Activated CD4-positive, alpha-beta memory T cell treated with anti-CD3 and anti-CD28 coated beads, Interleukin-2, amount 10 ng/mL, durations not matched to agents 7 days and 5 days (primary cell): ENCODE measurements at regions of chr6 and their contacts with region 1.

Region 1: DNA sequence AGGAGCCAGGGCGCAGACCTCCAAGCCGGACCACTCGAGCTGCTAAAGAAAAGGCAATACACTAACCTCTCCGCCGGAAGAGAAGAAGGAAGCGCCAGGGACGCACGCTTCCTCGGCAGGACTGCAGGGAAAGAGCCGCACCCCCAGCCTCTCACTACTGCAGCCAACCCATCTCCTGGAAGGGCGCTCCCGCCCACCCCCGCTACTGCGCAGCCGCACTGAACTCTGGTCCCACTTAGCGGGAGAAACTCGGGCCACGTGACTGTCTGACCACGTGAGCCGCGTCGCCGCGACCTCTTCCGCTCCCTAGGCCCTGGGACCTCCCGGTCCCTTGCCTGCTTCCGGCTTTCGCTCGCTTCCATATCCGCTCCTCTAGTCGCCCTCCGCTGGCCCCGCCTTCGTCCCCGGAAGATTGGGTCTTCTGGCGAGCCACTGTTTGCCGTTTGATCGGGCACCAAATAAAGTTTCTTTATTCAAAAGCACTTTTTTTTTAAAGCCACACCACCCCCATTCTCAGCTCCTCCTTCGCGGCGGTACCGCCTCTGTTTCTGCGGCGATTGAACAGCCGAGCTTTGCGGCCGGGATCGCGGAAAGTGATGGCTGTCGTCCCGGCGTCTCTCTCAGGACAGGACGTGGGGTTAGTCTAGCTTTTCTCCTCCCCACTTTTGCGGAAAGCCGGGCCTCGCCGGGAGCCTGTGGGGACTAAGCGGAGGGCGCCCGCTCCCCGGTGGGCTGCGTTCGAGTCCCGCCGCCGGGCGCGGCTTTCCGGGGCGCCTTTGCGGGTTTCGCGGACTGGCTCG is at the start of gene RMND1:
- DNase-seq: peak; percentile 100
- H3K4me3 Mint-ChIP-seq: peak within 1 kb of the TSS; percentile 94
- H3K27ac Mint-ChIP-seq: peak within 1 kb of the TSS; percentile 89
- H3K4me1 Mint-ChIP-seq: peaks cover 32% of the 10 kb centered on the region
- H3K27me3 Mint-ChIP-seq: no peaks in the 10 kb centered on the region
- total RNA-seq, gene RMND1: 18.7 to 22.6 TPM

Region 2: DNA sequence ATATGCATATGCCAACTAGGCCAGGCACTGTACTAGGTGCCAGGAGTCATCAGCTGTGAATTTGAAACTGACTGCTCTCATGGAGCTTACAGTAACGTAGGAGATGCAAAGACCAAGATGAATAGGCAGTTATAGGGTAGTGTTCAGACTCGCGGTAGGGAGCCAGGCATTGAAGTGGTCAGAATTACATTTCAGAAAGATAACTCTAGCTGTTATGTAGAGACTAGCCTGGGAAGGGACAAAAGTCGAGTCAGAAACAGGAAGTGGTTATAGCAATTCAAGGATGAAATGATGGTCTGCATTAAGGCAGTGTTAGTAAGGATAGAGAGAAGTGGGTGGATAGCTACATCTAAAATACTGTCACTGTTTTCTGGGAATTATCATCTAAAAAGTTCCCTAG is 1646.0 kb before region 1 on chr6:
- CTCF ChIA-PET with region 1: no interaction called
- POLR2A ChIA-PET with region 1: no interaction called
- DNase-seq: no peak
- H3K4me3 Mint-ChIP-seq: no peak overlapping the region
- H3K27ac Mint-ChIP-seq: peak overlapping the region; percentile 62
- H3K4me1 Mint-ChIP-seq: peaks cover 13% of the 10 kb centered on the region
- H3K27me3 Mint-ChIP-seq: no peaks in the 10 kb centered on the region

Region 3: DNA sequence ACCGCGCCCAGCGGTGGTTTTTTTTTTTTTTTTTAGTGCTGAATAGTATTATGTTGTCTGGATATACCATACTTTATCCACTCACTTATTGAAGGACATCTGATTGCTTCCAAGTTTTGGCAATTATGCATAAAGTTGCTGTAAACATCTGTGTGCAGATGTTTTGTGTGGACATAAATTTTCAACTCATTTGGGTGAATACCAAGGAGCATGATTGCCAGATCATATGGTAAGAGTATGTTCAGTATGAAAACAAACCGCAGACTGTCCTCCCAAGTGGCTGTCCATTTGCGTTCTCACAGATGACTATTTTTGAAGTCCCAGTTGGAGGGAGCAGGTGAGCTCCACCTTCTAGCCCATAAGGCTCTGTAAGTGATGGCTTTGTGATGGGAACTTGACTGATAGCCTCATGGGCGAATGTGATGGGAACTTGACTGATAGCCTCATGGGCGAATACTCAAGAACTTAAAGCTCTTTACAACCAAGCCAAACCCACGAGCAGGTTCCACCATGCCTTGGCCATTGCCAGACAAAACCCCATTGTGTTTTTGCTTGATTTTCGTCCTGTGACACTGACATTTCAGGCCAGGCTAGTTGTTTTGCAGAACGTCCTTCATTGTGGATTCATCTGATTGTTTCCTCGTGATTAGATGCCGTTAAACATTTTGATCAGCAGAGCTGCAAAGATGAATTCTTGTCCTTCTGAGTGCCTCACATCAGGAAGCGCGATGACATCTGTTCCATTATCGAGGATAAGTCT is 111.8 kb before region 1 on chr6:
- CTCF ChIA-PET with region 1: no interaction called
- POLR2A ChIA-PET with region 1: no interaction called
- DNase-seq: no peak
- H3K4me3 Mint-ChIP-seq: no peak overlapping the region
- H3K27ac Mint-ChIP-seq: no peak overlapping the region
- H3K4me1 Mint-ChIP-seq: no peaks in the 10 kb centered on the region
- H3K27me3 Mint-ChIP-seq: peaks cover 14% of the 10 kb centered on the region

Region 4: DNA sequence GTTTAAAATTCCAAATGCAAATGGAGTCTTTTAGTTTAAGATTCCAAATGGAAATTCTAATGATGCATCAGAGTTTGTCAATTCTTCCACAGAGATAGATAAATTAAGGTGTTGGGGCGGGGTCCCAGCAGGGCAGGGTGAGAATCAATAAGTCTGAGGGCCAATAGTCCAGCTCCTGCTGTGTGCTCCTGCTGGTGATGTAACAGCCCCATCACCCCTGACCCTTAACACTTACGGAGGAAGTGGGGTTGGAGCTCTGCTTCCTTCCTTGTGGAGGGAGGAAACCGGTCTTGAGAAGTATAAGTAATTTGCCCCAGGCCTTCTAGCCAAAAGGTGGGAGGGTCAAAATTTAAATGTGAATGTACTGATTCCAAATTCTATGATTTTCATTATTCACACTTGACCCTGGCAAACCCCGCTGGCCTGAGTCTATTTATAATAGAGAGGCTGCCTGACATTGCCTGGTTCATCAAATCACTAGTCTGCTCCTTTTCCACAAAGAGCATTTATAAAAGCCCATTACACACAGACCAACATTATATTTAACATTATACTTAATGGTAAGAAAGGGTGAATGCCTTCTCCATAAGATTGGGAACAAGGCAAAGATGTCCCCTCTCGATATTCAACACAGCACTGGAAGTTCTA is 78.0 kb before region 1 on chr6:
- CTCF ChIA-PET with region 1: no interaction called
- POLR2A ChIA-PET with region 1: interaction called, 15 read pairs
- DNase-seq: peak; percentile 35
- H3K4me3 Mint-ChIP-seq: peak overlapping the region; percentile 63
- H3K27ac Mint-ChIP-seq: peak overlapping the region; percentile 88
- H3K4me1 Mint-ChIP-seq: peaks cover 70% of the 10 kb centered on the region
- H3K27me3 Mint-ChIP-seq: no peaks in the 10 kb centered on the region

Region 5: DNA sequence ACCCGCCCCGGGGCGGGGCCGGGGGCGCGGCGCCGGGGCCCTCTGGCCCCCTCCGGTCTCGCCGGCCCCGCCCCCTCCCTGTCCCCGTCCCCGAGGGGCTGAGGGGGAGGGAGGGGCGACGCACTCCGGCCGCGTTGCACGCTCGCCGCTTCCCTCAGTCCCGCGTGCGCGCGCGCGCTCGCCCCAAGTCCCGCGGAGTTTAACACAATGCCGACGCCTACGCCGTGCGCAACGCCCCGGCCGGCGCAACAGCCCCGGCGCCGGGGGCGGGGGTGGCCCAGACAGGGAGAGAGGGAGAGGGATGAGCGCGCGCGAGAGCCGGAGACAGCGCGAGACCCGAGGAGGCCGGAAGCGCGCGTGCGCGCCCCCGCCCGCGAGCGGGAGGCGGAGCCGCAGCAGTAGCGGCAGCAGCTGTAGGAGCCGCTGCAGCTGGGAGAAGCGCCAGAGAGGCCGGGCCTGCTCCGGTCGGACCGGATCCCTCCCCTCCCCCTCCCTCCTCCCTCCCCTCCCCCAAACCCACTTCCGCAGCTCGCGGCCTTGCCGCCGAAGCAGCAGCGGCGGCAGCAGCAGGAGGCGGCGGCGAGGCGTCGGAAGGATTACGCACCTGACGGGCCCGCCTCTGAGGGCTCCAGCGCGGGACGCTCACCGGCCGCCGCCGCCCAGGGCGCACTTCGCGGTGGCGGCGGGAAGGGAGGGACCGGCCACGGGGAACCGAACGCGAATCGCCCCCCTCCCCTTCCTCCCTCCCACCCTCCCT is 61.7 kb before region 1 on chr6:
- CTCF ChIA-PET with region 1: interaction called, 10 read pairs
- POLR2A ChIA-PET with region 1: interaction called, 66 read pairs
- DNase-seq: peak; percentile 99
- H3K4me3 Mint-ChIP-seq: peak overlapping the region; percentile 64
- H3K27ac Mint-ChIP-seq: peak overlapping the region; percentile 85
- H3K4me1 Mint-ChIP-seq: peaks cover 65% of the 10 kb centered on the region
- H3K27me3 Mint-ChIP-seq: no peaks in the 10 kb centered on the region

Region 6: DNA sequence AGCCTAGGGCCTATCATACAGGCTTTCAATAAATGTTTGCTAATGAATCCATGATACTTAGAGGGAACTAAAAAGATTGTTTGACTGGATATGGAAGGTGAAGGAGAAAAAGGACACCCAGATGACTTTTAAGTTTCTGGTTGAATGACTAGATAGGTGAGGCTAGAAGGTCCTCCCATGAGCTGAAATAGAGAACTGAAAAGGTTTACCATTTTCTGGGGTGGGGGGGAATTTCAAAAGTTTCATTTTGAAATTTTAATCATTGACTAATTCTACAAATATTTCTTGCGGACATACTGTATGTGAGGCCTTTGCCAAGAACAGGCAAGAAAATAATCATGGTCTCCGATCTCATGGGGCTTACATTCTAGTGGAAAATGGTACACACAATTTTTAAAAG is 42.9 kb before region 1 on chr6:
- CTCF ChIA-PET with region 1: interaction called, 12 read pairs
- POLR2A ChIA-PET with region 1: interaction called, 8 read pairs
- DNase-seq: no peak
- H3K4me3 Mint-ChIP-seq: no peak overlapping the region
- H3K27ac Mint-ChIP-seq: no peak overlapping the region
- H3K4me1 Mint-ChIP-seq: peaks cover 19% of the 10 kb centered on the region
- H3K27me3 Mint-ChIP-seq: no peaks in the 10 kb centered on the region

Region 7: DNA sequence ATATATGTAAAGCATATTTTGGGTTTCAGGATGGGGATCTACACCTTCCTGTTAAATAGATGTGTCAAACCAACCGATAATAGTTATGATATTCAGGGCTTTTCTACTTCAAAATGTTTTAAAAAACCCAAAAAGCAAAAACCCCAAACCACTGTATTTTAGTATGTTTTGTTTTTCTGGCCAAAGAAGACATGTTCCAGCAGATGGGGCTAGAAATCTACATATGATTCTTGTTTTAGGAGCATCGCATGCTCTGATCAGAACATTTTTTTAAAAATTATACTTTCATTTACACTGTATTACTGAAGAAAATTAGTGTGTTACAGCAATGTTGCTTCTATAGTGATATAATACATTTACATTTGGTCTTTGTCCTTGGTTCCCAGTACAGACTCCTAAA is 11.2 kb before region 1 on chr6:
- CTCF ChIA-PET with region 1: interaction called, 7 read pairs
- POLR2A ChIA-PET with region 1: interaction called, 17 read pairs
- DNase-seq: no peak
- H3K4me3 Mint-ChIP-seq: no peak overlapping the region
- H3K27ac Mint-ChIP-seq: no peak overlapping the region
- H3K4me1 Mint-ChIP-seq: peaks cover 18% of the 10 kb centered on the region
- H3K27me3 Mint-ChIP-seq: no peaks in the 10 kb centered on the region

Region 8: DNA sequence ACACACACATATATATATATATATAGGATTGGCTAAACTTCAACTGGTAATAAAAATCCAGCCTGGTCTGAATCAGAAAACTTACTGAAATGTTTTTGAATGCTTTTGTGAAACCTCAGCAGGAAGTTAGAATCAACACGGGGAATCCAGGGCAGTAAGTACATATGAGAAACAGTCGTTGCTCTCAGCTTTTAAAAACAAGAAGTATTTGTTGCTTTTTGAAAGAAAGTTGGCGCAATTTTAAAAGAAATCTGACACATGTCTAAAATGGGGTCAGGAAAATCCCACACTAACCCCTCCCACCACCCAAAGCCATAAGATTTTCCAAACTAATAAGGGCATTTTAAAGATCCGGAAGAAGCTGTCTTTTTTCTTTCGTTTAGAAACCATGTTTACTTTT is 30.1 kb after region 1 on chr6:
- CTCF ChIA-PET with region 1: interaction called, 3 read pairs
- POLR2A ChIA-PET with region 1: interaction called, 11 read pairs
- DNase-seq: no peak
- H3K4me3 Mint-ChIP-seq: peak overlapping the region; percentile 71
- H3K27ac Mint-ChIP-seq: peak overlapping the region; percentile 92
- H3K4me1 Mint-ChIP-seq: peaks cover 22% of the 10 kb centered on the region
- H3K27me3 Mint-ChIP-seq: no peaks in the 10 kb centered on the region

Region 9: GRCh38 chr6:151576633-151577032 is 124.5 kb after region 1 on chr6:
- CTCF ChIA-PET with region 1: no interaction called
- POLR2A ChIA-PET with region 1: no interaction called
- DNase-seq: no peak
- H3K4me3 Mint-ChIP-seq: no peak overlapping the region
- H3K27ac Mint-ChIP-seq: no peak overlapping the region
- H3K4me1 Mint-ChIP-seq: no peaks in the 10 kb centered on the region
- H3K27me3 Mint-ChIP-seq: peaks cover 12% of the 10 kb centered on the region